ENCODE measurements at regions of chr4 and their contacts with region 1.

Region 1: GRCh38 chr4:101191302-101192098 is 155.8 kb downstream of the PPP3CA start:
- DNase-seq: peak; percentile 80 to 85
- ATAC-seq: peak; percentile 94
- H3K4me3 ChIP-seq: no peak overlapping the region
- H3K27ac ChIP-seq: peak overlapping the region in 1 of 2 donors; percentile 61
- H3K4me1 ChIP-seq: peaks cover 0 to 2% of the 10 kb centered on the region in 2 donors
- H3K27me3 ChIP-seq: no peaks in the 10 kb centered on the region

Region 2: DNA sequence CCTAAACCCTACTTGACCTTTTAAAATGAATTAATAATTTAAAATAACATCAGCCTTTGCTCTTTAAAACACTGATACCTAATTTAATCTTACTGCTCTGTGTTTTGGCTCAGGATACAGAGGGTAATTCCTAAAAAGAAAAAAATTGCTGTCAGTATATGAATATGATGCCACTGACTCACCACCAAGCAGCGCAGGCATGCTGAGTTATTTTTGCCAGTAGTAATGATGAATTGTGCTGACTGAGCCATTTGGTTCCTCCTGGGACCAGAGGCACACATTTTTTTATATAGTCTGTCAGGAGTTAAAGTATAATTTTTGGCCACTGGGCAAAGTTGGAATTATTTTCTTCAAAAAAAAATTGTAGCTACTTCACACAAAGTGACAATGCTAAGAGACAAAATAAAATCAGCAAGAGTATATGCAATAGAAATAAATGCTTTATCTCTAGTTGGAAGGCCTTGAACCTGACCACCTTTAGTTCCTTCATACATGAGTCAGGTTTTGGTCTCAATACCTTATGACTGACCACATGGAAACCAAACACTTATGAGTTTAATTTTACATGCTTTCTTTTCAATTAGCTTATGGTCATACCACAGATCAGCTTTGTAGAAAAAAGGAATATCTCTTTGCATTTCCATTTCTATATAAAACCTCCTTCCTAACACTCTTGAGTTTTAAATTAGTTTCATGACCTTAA is 40.7 kb after region 1 on chr4:
- intact Hi-C with region 1: loop called in 1 of 2 experiments (anchors 1 kb)
- DNase-seq: peak; percentile 69 to 71
- ATAC-seq: peak; percentile 57
- H3K4me3 ChIP-seq: no peak overlapping the region
- H3K27ac ChIP-seq: no peak overlapping the region
- H3K4me1 ChIP-seq: peaks cover 0 to 3% of the 10 kb centered on the region in 2 donors
- H3K27me3 ChIP-seq: no peaks in the 10 kb centered on the region

Region 3: DNA sequence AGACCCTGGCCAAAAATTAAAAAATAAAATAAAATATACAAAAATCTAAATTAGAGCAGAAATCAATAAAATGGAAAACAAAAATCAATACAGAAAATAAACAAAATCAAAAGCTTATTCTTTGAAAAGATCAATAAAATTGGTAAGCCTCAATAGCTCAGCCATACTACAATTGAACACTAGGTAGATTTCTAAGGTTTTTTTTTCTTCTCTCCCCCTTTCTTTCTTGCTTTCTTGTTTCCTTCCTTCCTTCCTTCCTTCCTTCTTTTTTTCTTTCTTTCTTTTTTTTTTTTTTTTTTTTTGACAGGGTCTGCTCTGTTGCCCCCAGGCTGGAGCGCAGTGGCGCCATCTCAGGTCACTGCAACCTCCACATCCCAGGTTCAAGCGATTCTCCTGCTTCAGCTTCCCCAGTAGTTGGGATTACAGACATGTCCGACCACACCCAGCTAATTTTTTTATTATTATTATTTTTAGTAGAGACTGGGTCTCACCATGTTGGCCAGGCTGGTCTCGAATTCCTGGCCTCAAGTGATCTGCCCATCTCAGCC is 179.2 kb after region 1 on chr4:
- intact Hi-C with region 1: no loop called
- DNase-seq: no peak
- ATAC-seq: no peak
- H3K4me3 ChIP-seq: no peak overlapping the region
- H3K27ac ChIP-seq: no peak overlapping the region
- H3K4me1 ChIP-seq: no peaks in the 10 kb centered on the region
- H3K27me3 ChIP-seq: no peaks in the 10 kb centered on the region

Measured in aorta (tissue), 5 donors.